GM12878 (cell line): ENCODE measurements at regions of chr6 and their contacts with region 1.

Region 1: DNA sequence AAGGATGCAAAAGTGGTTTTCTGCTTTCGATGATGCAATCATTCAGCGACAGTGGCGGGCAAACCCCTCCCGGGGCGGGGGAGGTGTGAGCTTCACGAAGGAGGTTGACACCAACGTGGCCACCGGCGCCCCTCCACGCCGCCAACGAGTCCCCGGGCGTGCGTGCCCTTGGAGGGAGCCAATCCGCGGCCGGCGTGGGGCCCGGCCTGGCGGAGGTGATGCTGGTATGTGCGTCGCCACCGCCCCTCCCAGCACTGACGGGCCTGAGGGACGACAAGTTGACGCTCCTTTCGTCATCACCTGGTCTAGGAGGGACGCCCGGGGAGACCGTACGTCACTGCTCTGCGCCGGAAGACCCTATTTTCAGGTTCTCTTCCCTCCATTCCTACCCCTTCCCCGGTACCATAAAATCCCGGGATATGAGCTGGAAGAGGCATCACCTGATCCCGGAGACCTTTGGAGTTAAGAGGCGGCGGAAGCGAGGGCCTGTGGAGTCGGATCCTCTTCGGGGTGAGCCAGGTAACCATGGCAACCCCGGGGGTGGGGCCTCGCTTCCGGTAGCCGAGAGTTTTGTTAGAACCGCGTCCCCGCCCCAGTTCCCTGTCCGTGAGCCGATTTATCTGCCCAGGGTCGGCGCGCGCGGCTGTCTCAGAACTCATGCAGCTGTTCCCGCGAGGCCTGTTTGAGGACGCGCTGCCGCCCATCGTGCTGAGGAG is at the start of gene DXO:
- DNase-seq: peak; percentile 94
- ATAC-seq: peak; percentile 97
- H3K4me3 ChIP-seq: peak within 1 kb of the TSS; percentile 66
- H3K27ac ChIP-seq: peak within 1 kb of the TSS; percentile 99
- H3K4me1 ChIP-seq: peaks cover 13% of the 10 kb centered on the region
- H3K27me3 ChIP-seq: no peaks in the 10 kb centered on the region
- CTCF ChIP-seq: no peak
- EP300 ChIP-seq: peak; percentile 49 to 51; a peak in 1 of 4 replicates
- POLR2A ChIP-seq: peak; percentile 83
- RAD21 ChIP-seq: no peak
- polyA plus RNA-seq, gene DXO: 4.5 to 6.4 TPM

Region 2: DNA sequence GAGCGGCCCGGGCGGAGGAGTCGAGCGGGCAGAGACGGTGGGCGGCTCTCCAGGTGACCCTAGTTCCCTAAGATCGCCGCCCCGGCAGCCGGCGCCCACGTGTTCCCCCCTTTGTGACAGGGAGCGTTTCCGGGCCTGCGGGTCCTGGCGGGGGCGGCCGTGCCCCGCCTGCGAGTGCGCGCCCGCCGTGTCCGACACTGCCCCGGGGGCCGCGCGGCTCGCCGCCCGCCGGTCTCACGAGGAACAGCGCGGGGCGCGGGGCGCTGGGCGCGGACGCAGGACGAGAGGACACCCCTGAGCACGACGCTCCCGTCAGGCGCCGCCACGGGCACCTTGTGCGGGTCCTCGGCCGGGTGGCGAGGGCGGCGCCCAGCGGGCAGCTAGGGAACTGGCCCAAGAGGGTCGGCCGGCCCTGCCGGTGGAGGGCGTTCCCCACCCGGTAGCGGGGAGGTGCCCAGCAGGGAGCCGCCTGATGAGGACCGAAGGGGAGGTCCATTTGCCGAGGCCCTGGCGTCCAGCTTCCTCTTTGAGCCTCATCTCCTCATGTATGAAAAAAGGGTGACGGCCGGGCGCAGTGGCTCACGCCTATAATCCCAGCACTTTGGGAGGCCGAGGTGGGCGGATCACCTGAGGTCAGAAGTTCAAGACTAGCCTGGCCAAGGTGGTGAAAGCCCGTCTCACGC is 176.4 kb before region 1 on chr6 and contains the start of gene VARS1:
- CTCF ChIA-PET with region 1: no interaction called
- POLR2A ChIA-PET with region 1: no interaction called
- RAD21 ChIA-PET with region 1: no interaction called
- SMC1A ChIA-PET with region 1: no interaction called
- in situ Hi-C with region 1: no loop called
- intact Hi-C with region 1: no loop called
- DNase-seq: peak; percentile 62
- ATAC-seq: peak; percentile 88
- H3K4me3 ChIP-seq: peak within 1 kb of the TSS; percentile 81
- H3K27ac ChIP-seq: peak within 1 kb of the TSS; percentile 95
- H3K4me1 ChIP-seq: peaks cover 4% of the 10 kb centered on the region
- H3K27me3 ChIP-seq: no peaks in the 10 kb centered on the region
- CTCF ChIP-seq: peak; percentile 84 to 98 (median 88); a peak in 5 of 6 replicates
- EP300 ChIP-seq: no peak
- POLR2A ChIP-seq: peak; percentile 76
- RAD21 ChIP-seq: peak; percentile 53
- polyA plus RNA-seq, gene VARS1: 1.2 to 5.7 TPM

Region 3: DNA sequence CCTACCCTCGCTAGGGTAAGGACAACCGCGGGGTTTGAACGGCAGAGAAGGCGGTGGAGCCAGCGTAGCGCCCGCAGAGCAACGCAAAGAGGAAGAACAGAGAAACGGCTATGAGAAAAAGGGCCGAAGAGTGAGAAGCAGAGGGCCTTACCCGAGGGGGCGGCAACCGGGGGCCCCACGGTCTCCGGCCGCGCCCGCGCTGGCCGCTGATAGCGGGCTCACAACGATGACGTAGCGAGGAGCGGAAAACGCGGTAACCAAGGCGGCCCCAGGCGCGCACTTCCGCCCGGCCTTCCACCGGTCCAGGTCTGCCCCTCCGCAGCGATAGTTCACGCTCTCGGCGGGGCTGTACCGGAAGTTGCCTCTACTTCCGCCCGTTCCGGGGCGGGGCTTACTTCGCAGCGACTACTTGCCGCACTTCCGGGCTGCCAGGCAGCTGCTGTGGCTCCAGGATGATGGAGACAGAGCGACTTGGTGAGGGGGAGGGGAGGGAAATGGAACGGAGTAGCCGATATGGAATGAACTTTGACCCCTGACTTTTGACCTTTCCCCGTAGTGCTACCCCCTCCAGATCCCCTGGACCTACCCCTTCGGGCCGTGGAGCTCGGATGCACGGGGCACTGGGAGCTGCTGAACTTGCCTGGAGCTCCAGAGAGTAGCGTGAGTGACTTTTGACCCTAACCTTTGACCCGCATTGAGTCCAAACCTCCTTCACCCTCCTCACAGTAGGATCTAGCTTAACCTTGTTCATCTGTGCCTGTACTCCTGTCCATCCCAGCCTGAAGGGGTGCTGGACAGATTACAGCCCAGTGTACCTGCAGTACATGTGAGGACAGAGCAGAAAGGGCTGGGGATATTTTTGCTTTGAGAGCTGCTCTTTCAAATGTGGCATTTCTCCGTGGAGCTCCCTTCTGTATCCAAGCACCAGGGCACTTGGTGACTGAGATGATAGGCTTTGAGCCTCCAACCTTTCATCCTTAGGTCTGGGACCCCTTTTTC is 13.1 kb before region 1 on chr6 and contains the starts of genes NELFE and SKIC2:
- CTCF ChIA-PET with region 1: interaction called, 10 read pairs
- POLR2A ChIA-PET with region 1: interaction called, 48 read pairs
- RAD21 ChIA-PET with region 1: interaction called, 11 read pairs
- SMC1A ChIA-PET with region 1: interaction called, 17 read pairs
- in situ Hi-C with region 1: no loop called
- intact Hi-C with region 1: loop called (anchors 1 kb)
- DNase-seq: peak; percentile 93
- ATAC-seq: peak; percentile 99
- H3K4me3 ChIP-seq: peak within 1 kb of the TSS; percentile 99
- H3K27ac ChIP-seq: peak within 1 kb of the TSS; percentile 84
- H3K4me1 ChIP-seq: peaks cover 11% of the 10 kb centered on the region
- H3K27me3 ChIP-seq: no peaks in the 10 kb centered on the region
- CTCF ChIP-seq: no peak
- EP300 ChIP-seq: peak in 1 of 2 experiments; percentile 42; a peak in 1 of 4 replicates
- POLR2A ChIP-seq: peak; percentile 87
- RAD21 ChIP-seq: no peak
- polyA plus RNA-seq, gene NELFE: 8.5 to 20.0 TPM
- polyA plus RNA-seq, gene SKIC2: 3.3 to 9.3 TPM

Region 4: DNA sequence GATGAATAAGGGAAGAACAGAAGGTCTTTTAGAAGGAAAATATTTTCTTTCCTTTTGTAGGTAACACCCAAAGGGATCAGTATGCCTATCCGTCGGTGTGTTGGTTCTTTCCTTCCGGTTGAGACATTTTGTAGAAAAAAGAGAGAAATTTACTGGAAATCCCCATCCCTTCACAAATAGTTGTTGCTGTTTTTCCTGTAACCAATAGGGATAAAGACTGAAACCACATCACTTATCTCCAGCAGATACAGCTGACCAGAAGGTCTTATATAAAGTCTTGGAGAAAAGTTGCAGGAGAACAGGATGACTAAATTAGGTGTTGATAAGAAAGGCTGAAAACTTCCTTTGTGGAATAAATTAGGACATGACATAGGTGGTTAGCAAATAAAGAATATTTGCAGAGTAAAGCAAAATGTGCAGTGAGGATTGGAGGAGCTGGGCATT is 632.3 kb after region 1 on chr6:
- CTCF ChIA-PET with region 1: no interaction called
- POLR2A ChIA-PET with region 1: no interaction called
- RAD21 ChIA-PET with region 1: no interaction called
- SMC1A ChIA-PET with region 1: no interaction called
- in situ Hi-C with region 1: no loop called
- intact Hi-C with region 1: no loop called
- DNase-seq: peak; percentile 82
- ATAC-seq: peak; percentile 73
- H3K4me3 ChIP-seq: no peak overlapping the region
- H3K27ac ChIP-seq: peak overlapping the region; percentile 95
- H3K4me1 ChIP-seq: peaks cover 9% of the 10 kb centered on the region
- H3K27me3 ChIP-seq: no peaks in the 10 kb centered on the region
- CTCF ChIP-seq: no peak
- EP300 ChIP-seq: peak in 1 of 2 experiments; percentile 62; a peak in 2 of 4 replicates
- POLR2A ChIP-seq: no peak
- RAD21 ChIP-seq: no peak